ENCODE measurements at regions of chr9 and their contacts with region 1.

Region 1: DNA sequence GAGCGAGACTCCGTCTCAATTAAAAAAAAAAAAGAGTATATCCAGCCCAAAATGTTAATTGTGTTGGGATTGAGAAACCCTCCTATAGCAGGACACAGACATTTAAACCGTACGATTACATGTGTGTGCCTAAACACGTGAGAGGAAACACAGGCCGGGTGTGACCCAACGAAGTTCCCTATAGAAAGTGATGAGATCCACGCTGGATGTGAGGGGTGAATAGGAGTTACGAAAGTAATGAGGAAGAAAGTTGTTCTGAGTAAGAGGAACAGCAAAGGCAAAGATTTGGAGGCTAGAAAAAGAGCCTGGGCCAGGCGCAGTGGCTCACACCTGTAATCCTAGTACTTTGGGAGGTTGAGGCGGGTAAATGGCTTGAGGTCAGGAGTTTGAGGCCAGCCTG is 13.6 kb downstream of the NAIF1 start:
- DNase-seq: no peak
- ATAC-seq: no peak
- H3K4me3 ChIP-seq: no peak overlapping the region
- H3K27ac ChIP-seq: no peak overlapping the region
- H3K4me1 ChIP-seq: peaks cover 92% of the 10 kb centered on the region
- H3K27me3 ChIP-seq: no peaks in the 10 kb centered on the region; a peak in 1 of 5 replicates
- CTCF ChIP-seq: no peak
- EP300 ChIP-seq: no peak
- POLR2A ChIP-seq: no peak
- RAD21 ChIP-seq: no peak

Region 2: GRCh38 chr9:127955294-127956035 is 98.1 kb before region 1 on chr9:
- CTCF ChIA-PET with region 1: no interaction called
- POLR2A ChIA-PET with region 1: interaction called, 13 read pairs
- in situ Hi-C with region 1: no loop called
- intact Hi-C with region 1: no loop called
- DNase-seq: peak; percentile 93
- ATAC-seq: peak; percentile 79
- H3K4me3 ChIP-seq: 0 out of 6 replicates have a peak overlapping the region, but pooled peaks of 1 of the 3 experiments have one; percentile 8
- H3K27ac ChIP-seq: peak overlapping the region; percentile 96
- H3K4me1 ChIP-seq: peaks cover 62% of the 10 kb centered on the region
- H3K27me3 ChIP-seq: no peaks in the 10 kb centered on the region
- CTCF ChIP-seq: peak; percentile 83
- EP300 ChIP-seq: peak in 1 of 2 experiments; percentile 63; a peak in 2 of 4 replicates
- POLR2A ChIP-seq: no peak
- RAD21 ChIP-seq: peak; percentile 81

Region 3: GRCh38 chr9:128007566-128008138 is 45.9 kb before region 1 on chr9:
- CTCF ChIA-PET with region 1: no interaction called
- POLR2A ChIA-PET with region 1: no interaction called
- in situ Hi-C with region 1: no loop called
- intact Hi-C with region 1: no loop called
- DNase-seq: peak; percentile 45
- ATAC-seq: no peak
- H3K4me3 ChIP-seq: peak overlapping the region in 2 of 3 experiments; percentile 9 to 44; a peak in 1 of 6 replicates
- H3K27ac ChIP-seq: no peak overlapping the region
- H3K4me1 ChIP-seq: peaks cover 69% of the 10 kb centered on the region
- H3K27me3 ChIP-seq: peaks cover 0 to 4% of the 10 kb centered on the region in 2 experiments; a peak in 2 of 5 replicates
- CTCF ChIP-seq: no peak
- EP300 ChIP-seq: no peak
- POLR2A ChIP-seq: no peak
- RAD21 ChIP-seq: no peak

Region 4: GRCh38 chr9:128067876-128068613 is 14.5 kb after region 1 on chr9 and contains the start of gene SLC25A25:
- CTCF ChIA-PET with region 1: no interaction called
- POLR2A ChIA-PET with region 1: interaction called, 41 read pairs
- in situ Hi-C with region 1: no loop called
- intact Hi-C with region 1: no loop called
- DNase-seq: peak; percentile 98
- ATAC-seq: peak; percentile 83
- H3K4me3 ChIP-seq: peak within 1 kb of the TSS; percentile 78 to 88 (median 85)
- H3K27ac ChIP-seq: peak within 1 kb of the TSS; percentile 98
- H3K4me1 ChIP-seq: peaks cover 58% of the 10 kb centered on the region
- H3K27me3 ChIP-seq: no peaks in the 10 kb centered on the region; a peak in 1 of 5 replicates
- CTCF ChIP-seq: no peak
- EP300 ChIP-seq: no peak
- POLR2A ChIP-seq: no peak; a peak in 1 of 4 replicates
- RAD21 ChIP-seq: peak; percentile 41; the same call in 1 of the 2 replicates
- total RNA-seq, gene SLC25A25: 18.5 and 24.8 TPM in 2 replicates

Region 5: DNA sequence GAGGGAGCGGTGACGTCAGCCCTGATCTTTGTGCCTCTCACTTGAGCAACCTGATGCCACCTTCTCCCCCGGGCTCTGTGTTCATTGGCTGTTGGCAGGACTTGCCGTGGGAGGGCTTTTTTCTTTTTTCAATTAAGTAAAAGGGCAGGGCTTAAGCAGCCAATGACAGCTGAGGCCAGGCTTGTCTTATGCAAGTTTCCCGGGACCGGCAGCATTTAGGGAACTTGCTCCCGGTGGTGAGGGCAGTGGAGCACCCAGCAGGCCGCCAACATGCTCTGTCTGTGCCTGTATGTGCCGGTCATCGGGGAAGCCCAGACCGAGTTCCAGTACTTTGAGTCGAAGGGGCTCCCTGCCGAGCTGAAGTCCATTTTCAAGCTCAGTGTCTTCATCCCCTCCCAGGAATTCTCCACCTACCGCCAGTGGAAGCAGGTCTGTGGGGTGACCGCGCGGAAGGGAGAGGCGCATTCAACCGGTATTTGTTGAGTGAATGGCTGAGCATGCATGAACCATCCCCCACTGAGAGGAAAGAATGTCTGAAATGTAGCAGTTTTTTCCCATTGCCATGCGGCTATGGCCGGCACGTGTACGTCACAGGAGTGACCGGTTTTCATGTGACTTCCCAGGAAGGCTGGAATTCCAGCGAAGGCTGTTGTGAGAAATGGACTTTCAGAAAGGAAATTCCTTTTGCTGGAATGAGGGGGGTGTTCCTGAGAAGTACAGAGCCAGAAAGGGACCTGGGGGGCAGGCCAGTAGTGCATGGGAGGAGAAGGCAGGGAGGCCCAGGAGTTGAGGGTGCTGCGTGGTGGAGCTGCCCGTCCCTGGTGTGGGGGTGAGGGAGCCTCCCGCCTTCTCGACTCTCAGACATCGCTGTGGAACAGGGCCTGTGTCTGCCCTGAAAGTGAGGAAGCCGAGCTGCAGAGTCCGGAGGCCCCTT is 45.0 kb after region 1 on chr9:
- CTCF ChIA-PET with region 1: no interaction called
- POLR2A ChIA-PET with region 1: interaction called, 12 read pairs
- in situ Hi-C with region 1: no loop called
- intact Hi-C with region 1: no loop called
- DNase-seq: peak; percentile 98
- ATAC-seq: peak; percentile 75
- H3K4me3 ChIP-seq: peak overlapping the region; percentile 72 to 89 (median 76)
- H3K27ac ChIP-seq: peak overlapping the region; percentile 92
- H3K4me1 ChIP-seq: peaks cover 86% of the 10 kb centered on the region
- H3K27me3 ChIP-seq: no peaks in the 10 kb centered on the region; a peak in 1 of 5 replicates
- CTCF ChIP-seq: no peak
- EP300 ChIP-seq: peak in 1 of 2 experiments; percentile 43; a peak in 2 of 4 replicates
- POLR2A ChIP-seq: peak in 1 of 2 experiments; percentile 99; a peak in 2 of 4 replicates
- RAD21 ChIP-seq: no peak

Region 6: DNA sequence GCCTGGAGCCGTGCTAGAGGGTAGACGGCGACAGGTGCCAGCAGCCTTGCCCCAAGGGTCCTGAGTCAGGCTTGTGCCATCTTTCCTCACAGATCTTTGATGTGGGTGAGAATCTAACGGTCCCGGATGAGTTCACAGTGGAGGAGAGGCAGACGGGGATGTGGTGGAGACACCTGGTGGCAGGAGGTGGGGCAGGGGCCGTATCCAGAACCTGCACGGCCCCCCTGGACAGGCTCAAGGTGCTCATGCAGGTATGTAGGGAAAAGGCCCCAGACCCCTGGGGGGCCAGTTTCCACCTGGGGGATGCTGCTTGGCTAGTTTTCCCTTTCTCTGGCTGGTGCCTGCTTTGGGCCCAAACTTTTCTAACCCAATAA is 50.0 kb after region 1 on chr9:
- CTCF ChIA-PET with region 1: no interaction called
- POLR2A ChIA-PET with region 1: interaction called, 12 read pairs
- in situ Hi-C with region 1: no loop called
- intact Hi-C with region 1: no loop called
- DNase-seq: peak; percentile 41
- ATAC-seq: peak; percentile 36
- H3K4me3 ChIP-seq: peak overlapping the region in 1 of 3 experiments; percentile 38; a peak in 2 of 6 replicates
- H3K27ac ChIP-seq: peak overlapping the region; percentile 90
- H3K4me1 ChIP-seq: peaks cover 91% of the 10 kb centered on the region
- H3K27me3 ChIP-seq: no peaks in the 10 kb centered on the region; a peak in 1 of 5 replicates
- CTCF ChIP-seq: peak; percentile 65
- EP300 ChIP-seq: no peak
- POLR2A ChIP-seq: no peak
- RAD21 ChIP-seq: peak; percentile 39; the same call in 1 of the 2 replicates

Measured in HepG2 (cell line).